ENCODE measurements at regions of chr20 and their contacts with region 1.

Region 1: GRCh38 chr20:47389867-47390347 is 33.4 kb upstream of the ZMYND8 start:
- DNase-seq: no peak
- H3K4me3 ChIP-seq: no peak overlapping the region
- H3K27ac ChIP-seq: no peak overlapping the region
- H3K4me1 ChIP-seq: no peaks in the 10 kb centered on the region
- H3K27me3 ChIP-seq: no peaks in the 10 kb centered on the region
- CTCF ChIP-seq: no peak
- POLR2A ChIP-seq: no peak

Region 2: GRCh38 chr20:47196091-47197081 is 193.5 kb before region 1 on chr20:
- intact Hi-C with region 1: loop called (anchors 10 kb)
- DNase-seq: no peak
- H3K4me3 ChIP-seq: no peak overlapping the region
- H3K27ac ChIP-seq: no peak overlapping the region
- H3K4me1 ChIP-seq: no peaks in the 10 kb centered on the region
- H3K27me3 ChIP-seq: no peaks in the 10 kb centered on the region
- CTCF ChIP-seq: peak; percentile 77 to 89 (median 89)
- POLR2A ChIP-seq: no peak

Region 3: DNA sequence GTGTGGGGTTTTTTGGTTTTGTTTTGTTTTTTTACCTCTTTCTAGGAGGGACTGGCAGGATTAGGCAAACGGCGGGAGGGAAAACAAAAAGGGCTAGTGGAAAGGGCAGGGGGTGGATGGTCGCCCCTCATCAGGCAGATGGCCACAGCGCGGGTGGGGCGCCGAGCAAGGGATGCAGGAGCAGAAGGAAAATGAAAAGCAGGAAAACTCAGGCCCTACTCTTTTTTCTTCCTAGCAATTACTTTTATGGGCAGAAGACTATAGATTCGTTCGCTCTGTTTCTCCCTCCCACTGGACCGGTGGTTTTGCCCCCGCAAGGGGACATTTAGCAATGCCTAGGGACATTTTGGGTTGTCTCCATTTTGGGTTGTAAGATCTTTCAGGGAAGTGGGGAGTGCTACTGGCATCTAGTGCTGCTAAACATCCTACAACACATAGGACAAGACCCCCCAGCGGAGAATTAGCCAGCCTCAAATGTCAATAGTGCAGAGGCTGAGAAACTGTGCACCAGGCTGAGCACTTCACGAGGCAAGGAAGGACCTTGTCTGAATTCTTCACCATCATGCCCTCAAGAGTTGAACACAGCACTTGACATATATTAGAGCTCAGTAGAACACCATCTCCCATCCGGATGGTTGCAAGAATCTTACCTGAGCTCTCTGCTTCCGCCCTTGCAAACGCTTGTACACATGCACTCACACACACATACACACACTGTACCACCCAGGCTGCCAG is 28.7 kb before region 1 on chr20:
- intact Hi-C with region 1: no loop called
- DNase-seq: no peak
- H3K4me3 ChIP-seq: no peak overlapping the region
- H3K27ac ChIP-seq: peak overlapping the region; percentile 99
- H3K4me1 ChIP-seq: peaks cover 57% of the 10 kb centered on the region
- H3K27me3 ChIP-seq: no peaks in the 10 kb centered on the region
- CTCF ChIP-seq: no peak
- POLR2A ChIP-seq: no peak

Region 4: GRCh38 chr20:47610247-47610944 is 220.5 kb after region 1 on chr20:
- intact Hi-C with region 1: loop called (anchors 10 kb)
- DNase-seq: no peak
- H3K4me3 ChIP-seq: no peak overlapping the region
- H3K27ac ChIP-seq: peak overlapping the region; percentile 7
- H3K4me1 ChIP-seq: no peaks in the 10 kb centered on the region
- H3K27me3 ChIP-seq: no peaks in the 10 kb centered on the region
- CTCF ChIP-seq: no peak
- POLR2A ChIP-seq: no peak

Measured in vagina (tissue), 2 donors.